Activated CD4-positive, alpha-beta T cell treated with anti-CD3 and anti-CD28 coated beads, Interleukin-2, amount 10 ng/mL, durations not matched to agents 7 days and 5 days (primary cell): ENCODE measurements at regions of chr1 and their contacts with region 1.

Region 1: DNA sequence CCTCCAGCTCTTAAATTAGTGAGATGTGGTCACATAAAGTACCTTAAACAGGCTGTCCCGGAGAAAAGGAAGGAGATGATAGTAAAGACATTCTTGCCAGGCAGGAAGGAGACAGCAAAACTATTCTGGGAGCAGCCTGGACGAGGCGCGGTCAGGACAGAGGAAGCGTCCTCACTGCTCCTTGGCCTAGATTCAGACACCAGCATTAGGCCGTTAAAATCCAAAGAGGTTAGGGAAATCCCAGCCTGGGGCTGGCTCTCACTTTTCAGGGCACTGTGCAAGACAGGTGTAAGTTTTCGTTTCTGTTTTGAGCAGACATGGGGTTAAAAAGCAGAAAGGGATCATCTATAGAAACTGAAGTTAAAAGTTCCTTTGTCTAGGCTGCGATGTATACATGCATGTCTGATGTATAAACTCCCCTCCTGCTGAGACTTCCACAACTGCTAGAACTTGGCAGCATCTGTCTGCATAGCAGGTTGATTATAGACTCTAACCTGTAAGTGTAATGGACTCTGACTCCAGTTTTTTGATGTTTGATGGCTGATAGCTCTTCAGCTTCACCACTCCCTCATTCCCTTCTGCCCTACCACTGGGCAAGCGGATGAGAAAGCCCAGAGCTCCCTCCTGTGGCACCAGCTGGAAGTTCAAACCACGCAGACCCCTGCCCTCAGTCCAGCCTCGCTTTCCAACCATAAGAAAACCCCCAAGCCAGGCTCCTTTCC is 21.5 kb downstream of the STPG1 start:
- DNase-seq: peak; percentile 74
- H3K4me3 Mint-ChIP-seq: peak overlapping the region; percentile 65
- H3K27ac Mint-ChIP-seq: peak overlapping the region; percentile 91
- H3K4me1 Mint-ChIP-seq: peaks cover 33% of the 10 kb centered on the region
- H3K27me3 Mint-ChIP-seq: no peaks in the 10 kb centered on the region

Region 2: GRCh38 chr1:24150234-24151174 is 241.5 kb before region 1 on chr1:
- CTCF ChIA-PET with region 1: interaction called, 52 read pairs
- POLR2A ChIA-PET with region 1: interaction called, 3 read pairs
- DNase-seq: peak; percentile 91
- H3K4me3 Mint-ChIP-seq: peak overlapping the region; percentile 33
- H3K27ac Mint-ChIP-seq: peak overlapping the region; percentile 6
- H3K4me1 Mint-ChIP-seq: peaks cover 20% of the 10 kb centered on the region
- H3K27me3 Mint-ChIP-seq: peaks cover 24% of the 10 kb centered on the region

Region 3: GRCh38 chr1:24201941-24202440 is 190.1 kb before region 1 on chr1:
- CTCF ChIA-PET with region 1: interaction called, 216 read pairs
- POLR2A ChIA-PET with region 1: interaction called, 7 read pairs
- DNase-seq: peak; percentile 68
- H3K4me3 Mint-ChIP-seq: no peak overlapping the region
- H3K27ac Mint-ChIP-seq: peak overlapping the region; percentile 75
- H3K4me1 Mint-ChIP-seq: peaks cover 10% of the 10 kb centered on the region
- H3K27me3 Mint-ChIP-seq: peaks cover 3% of the 10 kb centered on the region

Region 4: GRCh38 chr1:24321697-24322469 is 70.2 kb before region 1 on chr1:
- CTCF ChIA-PET with region 1: interaction called, 14 read pairs
- POLR2A ChIA-PET with region 1: interaction called, 3 read pairs
- DNase-seq: peak; percentile 83
- H3K4me3 Mint-ChIP-seq: peak overlapping the region; percentile 63
- H3K27ac Mint-ChIP-seq: peak overlapping the region; percentile 28
- H3K4me1 Mint-ChIP-seq: peaks cover 38% of the 10 kb centered on the region
- H3K27me3 Mint-ChIP-seq: peaks cover 92% of the 10 kb centered on the region

Region 5: GRCh38 chr1:24344090-24344742 is 47.8 kb before region 1 on chr1:
- CTCF ChIA-PET with region 1: interaction called, 13 read pairs
- POLR2A ChIA-PET with region 1: no interaction called
- DNase-seq: no peak
- H3K4me3 Mint-ChIP-seq: no peak overlapping the region
- H3K27ac Mint-ChIP-seq: no peak overlapping the region
- H3K4me1 Mint-ChIP-seq: no peaks in the 10 kb centered on the region
- H3K27me3 Mint-ChIP-seq: peaks cover 6% of the 10 kb centered on the region

Region 6: DNA sequence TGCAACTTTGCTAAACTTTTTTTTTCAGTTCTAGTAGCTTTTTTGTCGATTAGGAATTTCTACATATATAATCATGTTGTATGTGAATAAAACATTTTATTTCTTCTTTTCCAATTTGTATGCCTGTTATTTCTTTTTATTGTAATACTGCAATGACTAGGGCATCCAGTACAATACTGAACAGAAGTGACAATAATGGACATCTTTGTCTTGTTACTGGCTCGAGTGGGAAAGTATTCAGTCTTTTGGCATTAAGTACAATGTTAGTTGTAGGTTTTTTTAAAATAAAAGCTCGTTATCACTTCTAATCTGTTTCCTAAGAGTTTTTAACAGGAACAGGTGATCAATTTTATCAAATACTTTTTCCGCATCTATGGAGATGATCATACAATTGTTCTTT is 11.8 kb after region 1 on chr1:
- CTCF ChIA-PET with region 1: interaction called, 10 read pairs
- POLR2A ChIA-PET with region 1: no interaction called
- DNase-seq: no peak
- H3K4me3 Mint-ChIP-seq: no peak overlapping the region
- H3K27ac Mint-ChIP-seq: no peak overlapping the region
- H3K4me1 Mint-ChIP-seq: no peaks in the 10 kb centered on the region
- H3K27me3 Mint-ChIP-seq: no peaks in the 10 kb centered on the region

Region 7: DNA sequence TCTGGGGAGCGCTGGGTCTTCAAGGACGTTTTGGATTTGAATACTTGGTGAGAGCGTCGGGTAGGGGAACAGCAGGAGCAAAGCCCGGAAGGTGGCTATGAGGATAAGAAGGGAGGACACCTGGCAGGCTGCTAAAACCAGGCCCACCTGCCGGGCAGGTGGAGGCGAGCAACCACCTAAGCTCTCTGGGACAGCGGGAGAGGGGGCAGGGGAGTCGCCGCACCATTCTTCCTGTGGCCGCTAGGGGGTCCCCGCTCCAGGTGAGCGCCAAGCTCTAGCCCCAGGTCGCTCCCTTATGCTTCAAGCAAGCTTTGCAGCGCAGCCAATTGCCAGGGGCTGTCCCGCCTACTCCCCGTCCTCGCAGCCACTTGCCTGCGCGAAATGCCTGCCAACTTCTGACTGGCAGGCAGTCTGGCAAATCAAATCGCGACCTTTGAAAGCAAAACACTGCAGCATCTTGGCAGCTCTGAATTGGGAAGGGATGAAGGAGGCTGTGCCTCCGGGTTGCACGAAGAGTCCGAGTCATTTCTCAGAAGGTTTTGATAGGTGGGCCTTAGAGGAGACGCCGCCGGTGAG is 23.4 kb after region 1 on chr1 and contains the start of gene NIPAL3:
- CTCF ChIA-PET with region 1: interaction called, 30 read pairs
- POLR2A ChIA-PET with region 1: no interaction called
- DNase-seq: peak; percentile 99
- H3K4me3 Mint-ChIP-seq: peak within 1 kb of the TSS; percentile 99
- H3K27ac Mint-ChIP-seq: peak within 1 kb of the TSS; percentile 90
- H3K4me1 Mint-ChIP-seq: peaks cover 60% of the 10 kb centered on the region
- H3K27me3 Mint-ChIP-seq: no peaks in the 10 kb centered on the region
- total RNA-seq, gene NIPAL3: 72.8 to 78.1 TPM